ENCODE measurements at regions of chr15 and their contacts with region 1.

Region 1: DNA sequence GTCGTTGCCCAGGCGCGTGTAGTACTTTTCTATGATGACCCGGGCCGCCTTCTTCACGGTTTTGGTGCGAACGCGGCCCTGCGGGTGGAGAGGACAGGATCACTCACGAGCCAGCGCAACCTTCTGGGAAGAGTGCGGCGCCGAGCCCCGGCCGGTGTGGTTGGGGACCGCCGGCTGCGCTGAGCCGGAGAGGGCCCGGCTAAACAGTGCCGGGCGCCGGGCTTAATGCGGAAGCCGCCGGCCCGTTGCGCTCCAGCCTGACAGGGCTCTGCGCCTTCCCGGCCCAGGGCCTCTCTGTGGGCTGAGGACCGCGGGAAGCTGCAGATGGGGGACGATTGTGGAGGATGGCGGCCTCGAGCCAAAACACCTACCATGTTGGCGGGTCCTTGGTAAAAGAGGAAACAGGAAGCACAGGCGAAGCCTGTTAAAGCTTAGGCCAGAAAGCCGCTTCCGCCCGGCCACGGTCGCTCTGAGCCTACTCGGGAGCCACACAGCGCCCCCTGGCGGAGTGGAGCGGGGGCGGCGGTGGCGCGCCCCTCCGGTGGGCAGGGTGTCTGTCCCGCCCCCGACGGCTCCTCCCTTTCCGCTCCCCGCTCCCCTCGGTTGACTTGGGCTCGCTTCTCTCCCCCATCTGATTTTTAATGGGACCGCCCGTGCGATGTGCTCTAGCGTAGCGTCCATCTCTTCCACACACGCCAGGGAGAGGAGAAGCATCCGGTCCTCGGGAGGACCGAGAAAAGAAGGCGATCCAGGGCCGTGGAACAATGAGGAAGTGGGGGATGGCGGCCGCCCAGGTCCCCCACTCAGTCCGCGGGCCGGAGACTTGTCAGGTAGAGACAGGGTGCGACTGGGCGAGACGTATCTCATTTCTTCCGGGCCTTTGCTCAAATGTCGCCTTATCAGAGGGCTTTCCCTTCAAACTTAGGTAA is at the start of gene RPS17:
- DNase-seq: peak; percentile 96 to 99 (median 97)
- H3K4me3 ChIP-seq: peak within 1 kb of the TSS; percentile 90
- H3K27ac ChIP-seq: peak within 1 kb of the TSS; percentile 91 to 92
- H3K4me1 ChIP-seq: peaks cover 3% of the 10 kb centered on the region
- H3K27me3 ChIP-seq: no peaks in the 10 kb centered on the region
- CTCF ChIP-seq: peak; percentile 97 to 100 (median 98)
- EP300 ChIP-seq: no peak
- POLR2A ChIP-seq: peak; percentile 88
- total RNA-seq, gene RPS17: 2,388 to 6,661 (median 3,090) TPM

Region 2: GRCh38 chr15:82571722-82572222 is 31.5 kb after region 1 on chr15:
- intact Hi-C with region 1: no loop called
- DNase-seq: peak; percentile 71 to 76 (median 74)
- H3K4me3 ChIP-seq: peak overlapping the region; percentile 39
- H3K27ac ChIP-seq: peak overlapping the region in 1 of 2 donors; percentile 69
- H3K4me1 ChIP-seq: peaks cover 3% of the 10 kb centered on the region
- H3K27me3 ChIP-seq: no peaks in the 10 kb centered on the region
- CTCF ChIP-seq: no peak
- EP300 ChIP-seq: no peak
- POLR2A ChIP-seq: peak; percentile 22

Region 3: DNA sequence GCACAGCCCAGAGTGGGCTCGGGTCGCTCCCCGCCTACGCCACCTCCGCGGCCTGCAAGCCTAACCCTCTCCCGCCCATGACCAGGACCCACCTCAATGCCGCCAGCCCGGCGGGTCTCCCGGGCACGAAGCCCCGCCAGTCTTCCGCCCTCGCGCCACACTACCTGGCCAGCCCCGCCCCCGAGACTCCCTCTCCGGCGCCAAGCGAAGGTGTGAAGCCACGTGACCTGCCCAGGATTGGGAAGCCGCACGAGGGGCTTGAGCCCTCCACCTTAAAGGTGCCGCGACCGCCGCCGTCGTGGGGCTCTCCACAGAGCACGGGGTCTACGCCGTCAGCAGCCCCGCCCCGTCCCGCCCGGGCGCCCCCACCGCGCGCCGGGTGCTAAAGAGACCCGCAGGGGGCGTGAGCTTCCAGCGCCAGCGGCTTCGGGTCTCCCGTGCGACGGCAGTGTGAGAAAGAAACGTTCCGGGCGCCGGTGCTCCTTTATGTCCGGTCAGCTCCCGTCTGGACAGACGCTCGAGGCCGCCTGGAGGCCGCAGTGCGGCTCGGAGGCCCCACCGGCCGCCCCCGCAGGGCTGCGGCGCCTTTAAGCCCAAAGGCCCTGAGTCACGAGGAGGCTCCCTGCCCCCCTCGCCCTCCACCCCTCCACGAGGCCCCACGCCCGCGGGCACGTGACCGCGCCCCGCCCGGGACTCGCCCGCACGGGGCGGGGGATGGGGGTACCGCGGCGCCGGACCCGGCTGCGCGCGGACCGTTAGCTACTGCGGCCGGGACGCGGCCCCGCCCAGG is 106.9 kb after region 1 on chr15 and contains the start of gene CPEB1:
- intact Hi-C with region 1: loop called in 1 of 4 experiments (anchors 10 kb)
- DNase-seq: peak; percentile 83 to 86 (median 85)
- H3K4me3 ChIP-seq: peak within 1 kb of the TSS; percentile 50
- H3K27ac ChIP-seq: peak within 1 kb of the TSS; percentile 4 to 50
- H3K4me1 ChIP-seq: peaks cover 8% of the 10 kb centered on the region
- H3K27me3 ChIP-seq: no peaks in the 10 kb centered on the region
- CTCF ChIP-seq: peak in 1 of 3 donors; percentile 26
- EP300 ChIP-seq: no peak
- POLR2A ChIP-seq: peak; percentile 24
- total RNA-seq, gene CPEB1: 7.3 to 28.9 (median 11.5) TPM

Region 4: DNA sequence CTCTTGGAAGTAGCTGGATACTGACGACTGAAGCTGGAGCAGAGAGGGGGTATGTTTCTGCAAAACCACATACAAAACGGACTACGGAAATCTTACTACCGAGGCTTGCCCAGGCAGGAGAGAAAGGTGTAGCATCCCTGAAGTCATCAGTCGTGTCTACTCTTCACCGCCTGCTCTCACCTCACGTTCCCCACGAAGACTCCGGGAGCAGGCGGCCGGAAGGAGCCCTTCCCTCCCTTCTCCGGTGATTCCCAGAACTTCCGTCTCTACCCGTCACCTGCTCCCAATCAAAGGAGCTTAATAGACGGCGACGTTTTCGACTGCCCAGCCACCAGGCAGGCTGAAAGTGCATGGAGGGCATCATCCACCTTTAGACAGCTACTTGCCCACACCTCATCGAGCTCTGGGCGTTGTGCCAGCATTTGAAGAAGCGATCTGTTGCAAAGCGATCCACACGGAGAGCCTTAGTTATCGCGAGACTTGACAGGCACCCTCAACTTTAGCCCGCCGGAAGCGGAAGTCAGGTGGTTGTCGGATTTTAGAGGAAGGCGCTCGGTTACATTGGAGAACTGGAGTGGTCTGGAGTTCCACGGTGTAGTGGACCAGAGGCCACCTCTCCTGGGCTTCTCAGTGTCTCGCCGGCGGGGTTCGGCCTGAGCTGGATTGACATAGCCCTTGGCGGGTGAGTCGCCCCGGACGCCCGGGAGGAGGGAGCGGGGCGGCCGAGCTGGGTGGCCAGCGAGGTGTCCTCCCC is 445.5 kb after region 1 on chr15 and contains the start of gene RAMAC:
- intact Hi-C with region 1: loop called in 1 of 4 experiments (anchors 10 kb)
- DNase-seq: peak; percentile 89 to 92 (median 91)
- H3K4me3 ChIP-seq: peak within 1 kb of the TSS; percentile 87
- H3K27ac ChIP-seq: peak within 1 kb of the TSS in 1 of 2 donors; percentile 23
- H3K4me1 ChIP-seq: peaks cover 7% of the 10 kb centered on the region
- H3K27me3 ChIP-seq: no peaks in the 10 kb centered on the region
- CTCF ChIP-seq: peak in 1 of 3 donors; percentile 2
- EP300 ChIP-seq: no peak
- POLR2A ChIP-seq: peak; percentile 40
- total RNA-seq, gene RAMAC: 17.2 to 23.9 (median 21.2) TPM

Measured in ovary (tissue), 10 donors.